Astrocyte of the cerebellum (primary cell): ENCODE measurements at regions of chr1 and their contacts with region 1.

Region 1: GRCh38 chr1:89512996-89513720 is 11.5 kb upstream of the LRRC8B start:
- DNase-seq: no peak
- H3K4me3 ChIP-seq: no peak overlapping the region
- CTCF ChIP-seq: no peak

Region 2: DNA sequence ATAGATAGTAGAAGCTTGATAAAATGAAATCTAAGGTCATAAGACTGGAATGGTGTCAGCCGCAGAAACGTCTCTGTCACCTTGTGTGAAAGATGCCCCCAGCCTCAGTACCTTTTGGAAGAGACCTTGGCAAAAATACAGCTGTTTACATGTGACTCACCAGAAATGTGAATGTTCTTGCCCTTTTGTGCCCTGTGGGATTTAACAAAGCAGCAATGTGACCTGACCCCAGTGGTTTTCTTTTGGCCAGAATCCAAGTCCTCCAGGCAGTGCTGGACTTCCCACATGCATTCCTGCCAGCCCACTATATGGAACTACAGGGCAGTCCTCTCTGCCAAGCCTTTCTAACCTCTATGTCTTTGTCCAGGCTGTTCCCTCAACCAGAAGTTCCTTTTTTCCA is 92.5 kb after region 1 on chr1:
- in situ Hi-C with region 1: loop called (anchors 5 kb)
- DNase-seq: peak; percentile 46
- H3K4me3 ChIP-seq: no peak overlapping the region
- CTCF ChIP-seq: no peak